Activated CD8-positive, alpha-beta T cell treated with anti-CD3 and anti-CD28 coated beads for 36 hours (primary cell): ENCODE measurements at regions of chr3 and their contacts with region 1.

Region 1: GRCh38 chr3:100103558-100104441 is 10.5 kb downstream of the FILIP1L start:
- DNase-seq: peak; percentile 60
- ATAC-seq: peak; percentile 88
- H3K4me3 Mint-ChIP-seq: no peak overlapping the region
- H3K27ac Mint-ChIP-seq: peak overlapping the region; percentile 93
- H3K4me1 Mint-ChIP-seq: peaks cover 33% of the 10 kb centered on the region
- H3K27me3 Mint-ChIP-seq: no peaks in the 10 kb centered on the region
- CTCF ChIP-seq: no peak

Region 2: GRCh38 chr3:99825004-99825640 is 278.7 kb before region 1 on chr3:
- CTCF ChIA-PET with region 1: no interaction called
- POLR2A ChIA-PET with region 1: no interaction called
- intact Hi-C with region 1: no loop called
- DNase-seq: no peak
- ATAC-seq: peak; percentile 66
- H3K4me3 Mint-ChIP-seq: no peak overlapping the region
- H3K27ac Mint-ChIP-seq: no peak overlapping the region
- H3K4me1 Mint-ChIP-seq: peaks cover 38% of the 10 kb centered on the region
- H3K27me3 Mint-ChIP-seq: no peaks in the 10 kb centered on the region
- CTCF ChIP-seq: no peak

Region 3: GRCh38 chr3:100089812-100090668 is 13.8 kb before region 1 on chr3:
- CTCF ChIA-PET with region 1: interaction called, 13 read pairs
- POLR2A ChIA-PET with region 1: interaction called, 3 read pairs
- intact Hi-C with region 1: no loop called
- DNase-seq: peak; percentile 57
- ATAC-seq: peak; percentile 88
- H3K4me3 Mint-ChIP-seq: no peak overlapping the region
- H3K27ac Mint-ChIP-seq: peak overlapping the region; percentile 22
- H3K4me1 Mint-ChIP-seq: peaks cover 29% of the 10 kb centered on the region
- H3K27me3 Mint-ChIP-seq: no peaks in the 10 kb centered on the region
- CTCF ChIP-seq: peak; percentile 54